ENCODE measurements at regions of chr12 and their contacts with region 1.

Region 1: GRCh38 chr12:112012775-112013600 is at the starts of genes ERP29 and TMEM116:
- DNase-seq: peak; percentile 100
- ATAC-seq: peak; percentile 91 to 92 (median 92)
- H3K4me3 ChIP-seq: peak within 1 kb of the TSS; percentile 75
- H3K27ac ChIP-seq: peak within 1 kb of the TSS; percentile 98
- H3K4me1 ChIP-seq: peaks cover 20% of the 10 kb centered on the region
- H3K27me3 ChIP-seq: no peaks in the 10 kb centered on the region
- CTCF ChIP-seq: peak; percentile 67
- total RNA-seq, gene ERP29: 15.3 to 24.3 (median 19.6) TPM
- total RNA-seq, gene TMEM116: 3.2 to 7.3 (median 5.8) TPM

Region 2: GRCh38 chr12:111532741-111533140 is 480.2 kb before region 1 on chr12:
- intact Hi-C with region 1: no loop called
- DNase-seq: no peak
- ATAC-seq: no peak
- H3K4me3 ChIP-seq: no peak overlapping the region
- H3K27ac ChIP-seq: no peak overlapping the region
- H3K4me1 ChIP-seq: no peaks in the 10 kb centered on the region
- H3K27me3 ChIP-seq: no peaks in the 10 kb centered on the region
- CTCF ChIP-seq: no peak

Region 3: DNA sequence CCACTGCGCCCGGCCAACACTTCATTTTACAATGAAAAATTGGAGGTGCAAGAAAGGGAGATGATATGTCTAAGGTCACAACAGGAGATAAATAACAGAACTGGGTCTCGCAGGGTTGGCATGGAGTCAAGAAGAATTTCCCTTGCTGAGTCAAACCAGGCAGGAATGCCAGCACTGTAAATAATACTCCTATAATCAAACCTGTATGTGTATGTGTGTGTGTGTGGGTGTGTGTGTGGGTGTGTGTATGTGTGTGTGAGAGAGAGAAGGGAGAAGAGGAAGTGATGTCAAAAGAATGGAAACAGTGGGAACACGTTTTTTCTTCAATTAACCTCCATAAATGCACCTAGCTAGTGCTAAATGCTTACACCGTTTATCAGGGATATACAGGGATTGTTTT is 70.4 kb before region 1 on chr12:
- intact Hi-C with region 1: loop called (anchors 5 kb)
- DNase-seq: no peak
- ATAC-seq: peak in 3 of 4 donors; percentile 40 to 47 (median 41)
- H3K4me3 ChIP-seq: no peak overlapping the region
- H3K27ac ChIP-seq: no peak overlapping the region
- H3K4me1 ChIP-seq: peaks cover 5% of the 10 kb centered on the region
- H3K27me3 ChIP-seq: no peaks in the 10 kb centered on the region
- CTCF ChIP-seq: no peak